Mammary epithelial cell (primary cell): ENCODE measurements at regions of chr2 and their contacts with region 1.

Region 1: GRCh38 chr2:7567646-7568045 is 650.4 kb downstream of the RNF144A start:
- DNase-seq: no peak
- H3K4me3 ChIP-seq: no peak overlapping the region
- H3K27ac ChIP-seq: no peak overlapping the region
- H3K4me1 ChIP-seq: no peaks in the 10 kb centered on the region
- H3K27me3 ChIP-seq: no peaks in the 10 kb centered on the region
- CTCF ChIP-seq: no peak

Region 2: DNA sequence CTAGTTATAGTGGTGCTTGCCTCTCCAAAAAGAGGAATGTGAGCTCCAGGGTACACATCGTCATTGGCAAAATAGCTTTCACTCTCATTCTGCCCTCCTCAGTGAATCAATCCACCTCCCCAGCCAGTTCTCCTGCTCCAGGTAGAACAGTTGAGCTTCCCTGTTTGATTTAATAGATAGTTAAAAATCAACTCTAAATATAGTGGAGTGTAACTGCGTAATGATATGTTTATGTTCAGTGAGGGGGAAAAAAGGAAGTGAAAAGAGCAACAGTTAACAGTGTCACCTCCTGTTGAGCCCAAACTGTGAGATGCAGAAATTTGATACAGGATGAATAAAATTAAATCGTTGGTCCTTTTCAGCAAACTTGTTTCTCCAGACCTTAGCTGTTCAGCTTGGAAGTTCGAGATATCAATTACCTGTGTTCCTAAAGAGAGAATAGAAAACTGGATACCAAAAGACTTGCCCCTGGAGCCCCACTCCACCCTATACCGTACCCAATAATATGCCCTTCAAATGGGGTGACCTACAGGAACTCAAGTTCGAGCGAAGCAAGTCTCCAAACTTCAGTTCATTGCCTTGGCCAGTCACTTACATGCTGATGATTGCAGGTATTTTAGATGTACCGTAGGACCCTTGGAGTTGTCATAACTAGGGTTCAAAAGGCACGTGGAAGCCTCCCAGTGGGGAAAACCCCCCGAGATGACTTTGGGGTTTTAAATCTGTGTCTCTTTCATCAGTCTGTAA is 57.9 kb after region 1 on chr2:
- CTCF ChIA-PET with region 1: no interaction called
- dilution Hi-C with region 1: loop called (anchors 5 kb)
- in situ Hi-C with region 1: no loop called
- intact Hi-C with region 1: no loop called
- DNase-seq: no peak
- H3K4me3 ChIP-seq: no peak overlapping the region
- H3K27ac ChIP-seq: no peak overlapping the region
- H3K4me1 ChIP-seq: peaks cover 12% of the 10 kb centered on the region
- H3K27me3 ChIP-seq: no peaks in the 10 kb centered on the region
- CTCF ChIP-seq: no peak